GM23248 (cell line): ENCODE measurements at regions of chr11 and their contacts with region 1.

Region 1: DNA sequence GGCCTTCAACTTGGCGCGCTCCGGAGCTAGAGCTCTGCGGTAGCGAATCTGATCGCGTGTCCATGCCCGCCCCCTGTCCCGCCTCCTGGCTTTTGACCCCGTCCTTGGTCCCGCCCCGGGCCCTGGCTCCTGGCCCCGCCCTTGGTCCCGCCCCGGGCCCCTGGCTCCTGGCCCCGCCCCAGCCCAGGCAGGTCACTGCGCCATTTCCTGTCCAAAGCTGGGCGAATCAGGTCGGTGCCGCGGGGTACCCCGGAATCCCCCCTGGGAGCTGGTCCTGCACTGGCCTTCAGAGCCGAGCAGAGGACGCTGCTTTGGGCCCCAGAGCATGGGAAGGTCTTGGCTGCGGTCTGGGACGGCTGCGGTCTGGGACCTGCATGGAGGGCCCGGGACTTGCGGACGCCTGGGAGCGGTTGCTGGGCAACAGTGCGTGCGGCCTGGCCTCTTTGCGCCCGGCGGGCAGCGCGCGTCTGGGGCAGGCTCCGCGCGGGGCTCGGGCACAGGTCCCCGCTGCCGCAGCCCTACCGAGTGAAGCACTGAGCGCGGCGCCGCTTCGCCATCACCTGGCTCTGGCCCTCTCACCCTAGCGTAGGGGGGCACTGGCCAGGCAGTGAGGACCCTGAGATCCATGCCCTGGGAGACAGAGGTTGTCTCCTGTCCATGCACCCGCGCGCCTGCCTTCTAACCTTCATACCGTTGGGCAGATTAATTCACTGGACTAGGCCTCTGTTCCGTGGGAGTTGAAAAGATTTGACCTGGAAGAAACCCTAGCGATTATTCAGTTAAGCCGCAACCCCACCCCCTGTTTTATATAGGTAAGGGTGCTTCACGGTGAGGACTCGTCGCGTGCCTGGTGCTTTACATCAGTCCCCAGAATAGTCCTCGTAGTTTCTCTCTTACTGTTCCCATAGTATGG is at the start of gene TTC12:
- DNase-seq: peak; percentile 96
- H3K4me3 ChIP-seq: peak within 1 kb of the TSS; percentile 88
- H3K27ac ChIP-seq: peak within 1 kb of the TSS; percentile 61
- H3K4me1 ChIP-seq: no peaks in the 10 kb centered on the region
- H3K27me3 ChIP-seq: no peaks in the 10 kb centered on the region
- total RNA-seq, gene TTC12: 6.3 and 6.7 TPM in 2 replicates

Region 2: DNA sequence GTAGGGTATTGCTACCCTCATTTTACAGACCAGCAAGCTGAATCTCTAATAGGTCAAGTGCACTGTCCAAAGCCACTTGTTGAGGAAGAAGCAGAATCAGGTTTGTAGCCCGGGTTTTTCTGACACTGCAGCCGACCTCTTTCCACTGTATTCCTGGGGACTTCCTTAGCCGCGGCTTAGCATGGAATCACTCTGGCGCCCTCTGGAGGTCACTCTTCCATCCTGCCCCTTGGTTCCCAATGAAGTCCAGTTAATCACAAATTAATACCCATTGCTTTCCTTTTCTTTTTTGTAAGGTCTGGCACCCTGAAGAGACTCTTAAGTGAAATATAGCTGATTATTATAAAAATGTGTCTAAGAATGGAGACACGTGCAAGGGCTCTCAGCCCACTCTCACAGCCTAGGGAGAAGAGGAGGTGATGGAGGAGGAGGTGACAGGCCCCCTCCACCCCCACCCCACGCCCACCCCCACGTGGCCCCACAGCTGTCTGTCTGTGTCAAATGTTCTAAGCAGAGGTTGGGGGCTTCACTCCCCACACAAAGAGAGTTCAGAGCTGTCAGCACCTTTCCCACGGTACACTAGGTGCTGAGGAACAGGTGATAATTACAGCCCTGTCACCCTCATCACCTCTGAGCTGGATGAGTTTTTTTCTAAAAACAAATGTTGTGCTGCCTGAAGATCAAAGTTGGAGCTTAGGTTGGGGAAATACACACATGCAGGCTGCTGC is 218.2 kb after region 1 on chr11:
- in situ Hi-C with region 1: loop called (anchors 5 kb)
- DNase-seq: peak; percentile 83
- H3K4me3 ChIP-seq: no peak overlapping the region
- H3K27ac ChIP-seq: no peak overlapping the region
- H3K4me1 ChIP-seq: peaks cover 10% of the 10 kb centered on the region; the same call in 1 of the 2 replicates
- H3K27me3 ChIP-seq: peaks cover 33% of the 10 kb centered on the region